ENCODE measurements at regions of chr3 and their contacts with region 1.

Region 1: GRCh38 chr3:44477312-44478030 is at the start of gene ZNF445:
- DNase-seq: no peak
- ATAC-seq: peak; percentile 92
- H3K4me3 ChIP-seq: peak within 1 kb of the TSS; percentile 82
- H3K27ac ChIP-seq: peak within 1 kb of the TSS; percentile 27
- H3K4me1 ChIP-seq: peaks cover 4% of the 10 kb centered on the region; the same call in 1 of the 2 replicates
- H3K27me3 ChIP-seq: no peaks in the 10 kb centered on the region
- CTCF ChIP-seq: no peak
- EP300 ChIP-seq: no peak
- POLR2A ChIP-seq: peak; percentile 85
- RAD21 ChIP-seq: no peak
- polyA plus RNA-seq, gene ZNF445: 0.80 to 0.85 TPM

Region 2: GRCh38 chr3:44510000-44510368 is 32.5 kb after region 1 on chr3:
- CTCF ChIA-PET with region 1: no interaction called
- POLR2A ChIA-PET with region 1: interaction called, 4 read pairs
- RAD21 ChIA-PET with region 1: interaction called, 5 read pairs
- SMC1A ChIA-PET with region 1: interaction called, 7 read pairs
- in situ Hi-C with region 1: no loop called
- intact Hi-C with region 1: loop called (anchors 1 kb)
- DNase-seq: no peak
- ATAC-seq: peak; percentile 61
- H3K4me3 ChIP-seq: peak overlapping the region; percentile 81
- H3K27ac ChIP-seq: peak overlapping the region; percentile 81
- H3K4me1 ChIP-seq: peaks cover 8% of the 10 kb centered on the region
- H3K27me3 ChIP-seq: no peaks in the 10 kb centered on the region
- CTCF ChIP-seq: no peak
- EP300 ChIP-seq: no peak
- POLR2A ChIP-seq: no peak
- RAD21 ChIP-seq: no peak

Measured in GM12878 (cell line).